ENCODE measurements at regions of chr20 and their contacts with region 1.

Region 1: GRCh38 chr20:7226156-7226555 is 458.7 kb downstream of the BMP2 start:
- DNase-seq: no peak
- ATAC-seq: no peak
- H3K4me3 ChIP-seq: no peak overlapping the region
- H3K4me3 Mint-ChIP-seq: no peak overlapping the region
- H3K27ac ChIP-seq: no peak overlapping the region
- H3K27ac Mint-ChIP-seq: no peak overlapping the region
- H3K4me1 ChIP-seq: no peaks in the 10 kb centered on the region
- H3K4me1 Mint-ChIP-seq: no peaks in the 10 kb centered on the region
- H3K27me3 ChIP-seq: no peaks in the 10 kb centered on the region
- H3K27me3 Mint-ChIP-seq: no peaks in the 10 kb centered on the region
- CTCF ChIP-seq: no peak

Region 2: GRCh38 chr20:7161690-7162089 is 64.5 kb before region 1 on chr20:
- CTCF ChIA-PET with region 1: no interaction called
- POLR2A ChIA-PET with region 1: no interaction called
- intact Hi-C with region 1: loop called in 1 of 2 experiments (anchors 10 kb)
- DNase-seq: no peak
- ATAC-seq: no peak
- H3K4me3 ChIP-seq: no peak overlapping the region
- H3K4me3 Mint-ChIP-seq: no peak overlapping the region
- H3K27ac ChIP-seq: no peak overlapping the region
- H3K27ac Mint-ChIP-seq: no peak overlapping the region
- H3K4me1 ChIP-seq: no peaks in the 10 kb centered on the region
- H3K4me1 Mint-ChIP-seq: no peaks in the 10 kb centered on the region
- H3K27me3 ChIP-seq: no peaks in the 10 kb centered on the region
- H3K27me3 Mint-ChIP-seq: no peaks in the 10 kb centered on the region
- CTCF ChIP-seq: no peak

Region 3: DNA sequence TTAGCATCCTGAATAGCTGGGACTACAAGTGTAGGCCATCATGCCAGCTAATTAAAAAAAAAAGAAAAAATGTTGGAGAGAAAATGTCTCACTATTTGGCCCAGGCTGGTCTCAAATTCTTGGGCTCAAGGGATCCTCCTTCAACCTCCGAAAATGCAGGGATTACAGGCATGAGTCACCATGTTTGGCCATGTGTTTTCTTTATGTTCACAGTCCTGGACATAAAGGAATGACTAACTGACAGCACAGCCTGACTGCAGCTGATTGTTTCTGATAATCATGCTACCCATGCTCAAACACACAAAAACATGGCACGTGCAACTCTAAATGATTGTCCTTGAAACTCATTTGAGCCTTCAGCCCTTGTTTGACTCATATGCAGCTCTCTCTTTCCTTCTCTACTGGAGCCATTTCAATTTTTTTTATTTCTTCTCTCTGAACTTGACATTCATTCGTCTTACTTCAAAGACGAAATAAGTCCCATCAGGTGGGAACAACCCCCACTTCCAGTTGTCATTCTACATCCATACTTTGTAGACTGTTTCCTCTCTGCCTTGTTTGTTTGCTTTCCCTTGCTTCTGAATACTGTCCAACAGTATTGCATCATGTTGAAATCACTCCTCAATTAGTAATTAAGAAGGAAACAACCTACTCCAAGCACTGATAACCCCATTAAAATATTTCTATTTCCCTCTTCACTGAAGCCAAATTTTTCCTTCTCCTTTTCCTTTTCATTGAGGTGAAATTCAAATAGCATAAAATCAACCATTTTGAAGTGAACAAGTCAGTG is 45.7 kb before region 1 on chr20:
- CTCF ChIA-PET with region 1: no interaction called
- POLR2A ChIA-PET with region 1: no interaction called
- intact Hi-C with region 1: no loop called
- DNase-seq: no peak
- ATAC-seq: no peak
- H3K4me3 ChIP-seq: no peak overlapping the region
- H3K4me3 Mint-ChIP-seq: no peak overlapping the region
- H3K27ac ChIP-seq: no peak overlapping the region
- H3K27ac Mint-ChIP-seq: no peak overlapping the region
- H3K4me1 ChIP-seq: no peaks in the 10 kb centered on the region
- H3K4me1 Mint-ChIP-seq: no peaks in the 10 kb centered on the region
- H3K27me3 ChIP-seq: no peaks in the 10 kb centered on the region
- H3K27me3 Mint-ChIP-seq: no peaks in the 10 kb centered on the region
- CTCF ChIP-seq: no peak